ENCODE measurements at regions of chr22 and their contacts with region 1.

Region 1: GRCh38 chr22:19103880-19104821 is 18.1 kb downstream of the DGCR2 start:
- DNase-seq: peak in 1 of 2 donors; percentile 75
- ATAC-seq: peak; percentile 52 to 72 (median 66)
- H3K4me3 ChIP-seq: no peak overlapping the region
- H3K27ac ChIP-seq: peak overlapping the region; percentile 71
- H3K4me1 ChIP-seq: peaks cover 65% of the 10 kb centered on the region
- H3K27me3 ChIP-seq: no peaks in the 10 kb centered on the region
- CTCF ChIP-seq: no peak

Region 2: GRCh38 chr22:19066531-19067271 is 37.5 kb before region 1 on chr22:
- intact Hi-C with region 1: loop called in 1 of 2 experiments (anchors 5 kb)
- DNase-seq: peak; percentile 42 to 72
- ATAC-seq: peak; percentile 84 to 93 (median 90)
- H3K4me3 ChIP-seq: no peak overlapping the region
- H3K27ac ChIP-seq: peak overlapping the region; percentile 60
- H3K4me1 ChIP-seq: peaks cover 13% of the 10 kb centered on the region
- H3K27me3 ChIP-seq: no peaks in the 10 kb centered on the region
- CTCF ChIP-seq: no peak

Measured in psoas muscle (tissue), 8 donors.